ENCODE measurements at regions of chr11 and their contacts with region 1.

Region 1: GRCh38 chr11:34653826-34654490 is 33.1 kb downstream of the EHF start:
- DNase-seq: no peak
- H3K4me3 Mint-ChIP-seq: peak overlapping the region; percentile 19
- H3K27ac Mint-ChIP-seq: no peak overlapping the region
- H3K4me1 Mint-ChIP-seq: peaks cover 24% of the 10 kb centered on the region
- H3K27me3 Mint-ChIP-seq: peaks cover 68% of the 10 kb centered on the region

Region 2: GRCh38 chr11:34243726-34244464 is 410.1 kb before region 1 on chr11:
- intact Hi-C with region 1: loop called (anchors 5 kb)
- DNase-seq: peak; percentile 82
- H3K4me3 Mint-ChIP-seq: peak overlapping the region; percentile 62
- H3K27ac Mint-ChIP-seq: peak overlapping the region; percentile 72
- H3K4me1 Mint-ChIP-seq: peaks cover 80% of the 10 kb centered on the region
- H3K27me3 Mint-ChIP-seq: no peaks in the 10 kb centered on the region

Region 3: GRCh38 chr11:34633990-34634693 is 19.8 kb before region 1 on chr11:
- intact Hi-C with region 1: loop called (anchors 1 kb)
- DNase-seq: peak; percentile 66
- H3K4me3 Mint-ChIP-seq: peak overlapping the region; percentile 18
- H3K27ac Mint-ChIP-seq: no peak overlapping the region
- H3K4me1 Mint-ChIP-seq: peaks cover 12% of the 10 kb centered on the region
- H3K27me3 Mint-ChIP-seq: peaks cover 45% of the 10 kb centered on the region

Region 4: GRCh38 chr11:35165423-35166368 is 511.7 kb after region 1 on chr11:
- intact Hi-C with region 1: loop called (anchors 2 kb)
- DNase-seq: peak; percentile 98
- H3K4me3 Mint-ChIP-seq: peak overlapping the region; percentile 78
- H3K27ac Mint-ChIP-seq: peak overlapping the region; percentile 99
- H3K4me1 Mint-ChIP-seq: peaks cover 93% of the 10 kb centered on the region
- H3K27me3 Mint-ChIP-seq: no peaks in the 10 kb centered on the region

Region 5: GRCh38 chr11:35343033-35343598 is 689.2 kb after region 1 on chr11:
- intact Hi-C with region 1: loop called (anchors 5 kb)
- DNase-seq: peak; percentile 92
- H3K4me3 Mint-ChIP-seq: peak overlapping the region; percentile 68
- H3K27ac Mint-ChIP-seq: peak overlapping the region; percentile 89
- H3K4me1 Mint-ChIP-seq: peaks cover 37% of the 10 kb centered on the region
- H3K27me3 Mint-ChIP-seq: peaks cover 3% of the 10 kb centered on the region

Measured in activated CD4-positive, alpha-beta T cell treated with anti-CD3 and anti-CD28 coated beads, Interleukin-2, amount 10 ng/mL, durations not matched to agents 24 days and 14 days (primary cell).